Transverse colon (tissue), 4 donors: ENCODE measurements at regions of chr11 and their contacts with region 1.

Region 1: DNA sequence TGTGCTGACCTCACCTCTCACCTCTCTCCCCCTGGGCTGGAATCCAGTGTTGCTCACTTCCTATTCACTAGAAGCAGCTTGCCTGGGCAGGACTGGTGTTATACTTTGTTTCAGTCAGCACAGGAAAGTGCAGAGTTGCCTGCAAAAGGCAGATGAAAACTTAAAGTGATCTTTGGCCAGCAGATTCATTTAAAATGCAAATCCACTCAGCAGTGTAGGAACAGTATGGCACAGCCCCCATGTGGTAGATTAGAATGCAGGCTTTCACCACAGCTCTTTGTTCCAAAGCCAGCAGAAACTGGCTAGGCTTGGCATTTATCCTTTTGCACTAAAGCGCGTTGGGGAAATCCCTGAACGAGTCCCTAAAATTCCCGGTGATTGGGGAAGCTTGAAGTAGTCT is 301.2 kb downstream of the OR4C45 start:
- DNase-seq: no peak
- H3K4me3 ChIP-seq: no peak overlapping the region
- H3K27ac ChIP-seq: no peak overlapping the region
- H3K4me1 ChIP-seq: no peaks in the 10 kb centered on the region
- H3K27me3 ChIP-seq: no peaks in the 10 kb centered on the region
- CTCF ChIP-seq: no peak
- EP300 ChIP-seq: no peak
- POLR2A ChIP-seq: no peak

Region 2: GRCh38 chr11:50075856-50076255 is 258.0 kb before region 1 on chr11:
- in situ Hi-C with region 1: loop called in 2 of 4 experiments (anchors 25 kb)
- intact Hi-C with region 1: no loop called
- DNase-seq: no peak
- H3K4me3 ChIP-seq: no peak overlapping the region
- H3K27ac ChIP-seq: no peak overlapping the region
- H3K4me1 ChIP-seq: no peaks in the 10 kb centered on the region
- H3K27me3 ChIP-seq: no peaks in the 10 kb centered on the region
- CTCF ChIP-seq: no peak
- EP300 ChIP-seq: no peak
- POLR2A ChIP-seq: no peak

Region 3: DNA sequence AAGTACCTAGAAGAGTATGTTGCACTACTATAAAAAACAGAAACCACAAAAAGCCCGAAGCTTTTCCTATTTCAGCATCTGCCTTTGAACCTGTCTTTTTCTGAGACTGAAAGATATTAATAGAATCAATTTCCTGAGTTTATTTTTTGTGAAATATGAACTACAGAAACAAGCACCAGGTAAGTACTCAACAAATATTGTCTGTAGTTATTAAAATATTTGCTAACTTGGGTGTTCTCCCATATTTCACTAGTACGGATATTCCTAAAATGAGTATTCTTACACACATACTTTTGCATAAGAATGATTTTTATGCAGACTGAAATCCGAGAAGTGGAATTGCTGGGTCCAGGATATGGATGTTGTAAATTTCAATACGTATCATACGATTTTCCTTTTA is 113.2 kb before region 1 on chr11:
- in situ Hi-C with region 1: no loop called
- intact Hi-C with region 1: no loop called
- DNase-seq: no peak
- H3K4me3 ChIP-seq: no peak overlapping the region
- H3K27ac ChIP-seq: no peak overlapping the region
- H3K4me1 ChIP-seq: no peaks in the 10 kb centered on the region
- H3K27me3 ChIP-seq: no peaks in the 10 kb centered on the region
- CTCF ChIP-seq: no peak
- EP300 ChIP-seq: no peak
- POLR2A ChIP-seq: no peak